CD4-positive, alpha-beta T cell (primary cell): ENCODE measurements at regions of chr11 and their contacts with region 1.

Region 1: DNA sequence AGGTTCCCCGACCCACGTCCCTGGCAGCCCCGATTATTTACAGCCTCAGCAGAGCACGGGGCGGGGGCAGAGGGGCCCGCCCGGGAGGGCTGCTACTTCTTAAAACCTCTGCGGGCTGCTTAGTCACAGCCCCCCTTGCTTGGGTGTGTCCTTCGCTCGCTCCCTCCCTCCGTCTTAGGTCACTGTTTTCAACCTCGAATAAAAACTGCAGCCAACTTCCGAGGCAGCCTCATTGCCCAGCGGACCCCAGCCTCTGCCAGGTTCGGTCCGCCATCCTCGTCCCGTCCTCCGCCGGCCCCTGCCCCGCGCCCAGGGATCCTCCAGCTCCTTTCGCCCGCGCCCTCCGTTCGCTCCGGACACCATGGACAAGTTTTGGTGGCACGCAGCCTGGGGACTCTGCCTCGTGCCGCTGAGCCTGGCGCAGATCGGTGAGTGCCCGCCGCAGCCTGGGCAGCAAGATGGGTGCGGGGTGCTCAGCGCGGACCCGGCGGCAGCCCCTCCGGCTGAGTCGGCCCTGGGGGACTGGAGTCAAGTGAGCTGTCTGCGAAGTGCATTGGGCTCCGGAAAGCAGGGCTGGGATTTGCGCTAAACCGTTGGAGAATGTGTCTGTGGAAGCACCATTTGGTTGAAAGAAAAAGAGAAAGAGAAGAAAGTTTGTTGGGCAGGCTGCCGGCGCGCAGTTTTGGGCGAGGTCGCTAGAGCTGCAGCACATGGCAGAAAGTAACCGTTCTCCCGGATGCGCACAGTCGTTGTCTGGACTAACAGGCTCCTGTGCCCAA is at the start of gene CD44:
- DNase-seq: peak; percentile 70 to 95 (median 80)
- ATAC-seq: peak; percentile 77
- H3K4me3 ChIP-seq: peak within 1 kb of the TSS; percentile 88
- H3K4me3 Mint-ChIP-seq: peak within 1 kb of the TSS; percentile 97
- H3K27ac ChIP-seq: peak within 1 kb of the TSS; percentile 79 to 97
- H3K27ac Mint-ChIP-seq: peak within 1 kb of the TSS; percentile 96
- H3K4me1 ChIP-seq: peaks cover 46% of the 10 kb centered on the region
- H3K4me1 Mint-ChIP-seq: peaks cover 55% of the 10 kb centered on the region
- H3K27me3 ChIP-seq: no peaks in the 10 kb centered on the region
- H3K27me3 Mint-ChIP-seq: no peaks in the 10 kb centered on the region
- CTCF ChIP-seq: no peak
- total RNA-seq, gene CD44: 1,283 to 1,330 TPM

Region 2: DNA sequence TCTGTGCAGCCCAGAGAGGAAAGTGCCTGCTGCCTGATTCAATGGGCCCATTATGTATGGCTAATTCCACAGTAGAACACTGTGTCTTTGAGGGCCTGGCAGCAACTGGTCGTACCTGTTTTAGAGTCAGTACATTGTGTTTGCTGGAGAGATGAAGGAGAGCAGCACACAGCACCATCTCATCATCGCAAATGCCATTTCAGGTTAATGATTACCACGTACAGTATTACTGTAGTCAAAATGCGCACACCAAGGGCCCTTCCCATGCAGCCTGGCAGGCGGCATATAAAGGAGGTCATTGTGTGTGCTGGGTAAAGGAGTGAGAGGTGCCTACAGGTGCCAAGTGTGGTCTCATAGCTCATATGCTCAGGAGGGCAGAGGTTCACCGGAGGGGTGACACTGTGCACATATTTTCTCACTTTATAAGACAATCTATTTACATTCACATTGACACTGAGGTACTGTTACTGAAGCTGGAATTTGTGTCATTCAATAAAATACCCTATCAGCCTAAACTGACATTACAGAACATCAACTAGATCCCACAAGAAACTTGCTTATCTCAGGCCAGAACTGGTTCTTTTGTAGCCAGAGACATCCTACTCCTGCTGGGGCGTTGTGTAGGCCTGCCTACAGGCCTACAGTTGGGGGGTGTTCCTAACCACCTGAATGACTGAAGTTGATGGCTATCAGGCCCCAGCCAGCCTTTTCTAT is 313.3 kb before region 1 on chr11:
- CTCF ChIA-PET with region 1: no interaction called
- POLR2A ChIA-PET with region 1: no interaction called
- intact Hi-C with region 1: no loop called
- DNase-seq: no peak
- ATAC-seq: no peak
- H3K4me3 ChIP-seq: no peak overlapping the region
- H3K4me3 Mint-ChIP-seq: no peak overlapping the region
- H3K27ac ChIP-seq: no peak overlapping the region
- H3K27ac Mint-ChIP-seq: no peak overlapping the region
- H3K4me1 ChIP-seq: no peaks in the 10 kb centered on the region
- H3K4me1 Mint-ChIP-seq: peaks cover 2% of the 10 kb centered on the region
- H3K27me3 ChIP-seq: peaks cover 0 to 10% of the 10 kb centered on the region in 2 experiments
- H3K27me3 Mint-ChIP-seq: peaks cover 4% of the 10 kb centered on the region
- CTCF ChIP-seq: no peak

Region 3: DNA sequence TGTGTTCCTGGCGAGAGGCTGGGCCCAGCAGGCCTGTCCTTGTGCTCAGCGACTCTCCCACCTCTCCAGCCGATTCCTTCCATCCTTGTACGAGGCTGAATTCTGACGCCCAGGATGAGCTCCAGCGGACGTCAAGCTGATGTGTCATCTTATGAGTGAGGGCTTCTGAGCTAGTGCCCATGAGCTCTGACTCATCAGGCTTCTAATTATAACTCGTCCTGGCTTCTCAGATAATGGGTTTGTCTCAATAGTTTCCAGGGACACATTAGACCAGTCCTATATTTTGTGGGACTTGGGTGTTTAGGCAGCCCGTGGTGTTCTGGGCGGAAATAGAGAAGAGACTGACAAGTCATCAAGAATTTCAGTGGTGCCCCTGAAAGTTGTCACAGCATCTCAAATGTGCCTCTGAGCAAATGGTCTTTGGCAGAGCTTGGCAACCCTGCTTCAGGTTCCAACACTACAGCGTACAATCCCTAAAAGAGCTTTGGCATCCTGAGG is 108.4 kb before region 1 on chr11:
- CTCF ChIA-PET with region 1: no interaction called
- POLR2A ChIA-PET with region 1: interaction called, 10 read pairs
- intact Hi-C with region 1: no loop called
- DNase-seq: peak in 7 of 14 experiments; percentile 15 to 77 (median 50)
- ATAC-seq: peak; percentile 62
- H3K4me3 ChIP-seq: no peak overlapping the region
- H3K4me3 Mint-ChIP-seq: peak overlapping the region; percentile 57
- H3K27ac ChIP-seq: no peak overlapping the region
- H3K27ac Mint-ChIP-seq: peak overlapping the region; percentile 77
- H3K4me1 ChIP-seq: peaks cover 26% of the 10 kb centered on the region
- H3K4me1 Mint-ChIP-seq: peaks cover 72% of the 10 kb centered on the region
- H3K27me3 ChIP-seq: no peaks in the 10 kb centered on the region
- H3K27me3 Mint-ChIP-seq: no peaks in the 10 kb centered on the region
- CTCF ChIP-seq: no peak

Region 4: GRCh38 chr11:35047179-35047578 is 92.0 kb before region 1 on chr11:
- CTCF ChIA-PET with region 1: interaction called, 13 read pairs
- POLR2A ChIA-PET with region 1: interaction called, 26 read pairs
- intact Hi-C with region 1: loop called (anchors 1 to 2 kb)
- DNase-seq: peak; percentile 27 to 91 (median 46)
- ATAC-seq: peak; percentile 70
- H3K4me3 ChIP-seq: no peak overlapping the region
- H3K4me3 Mint-ChIP-seq: peak overlapping the region; percentile 83
- H3K27ac ChIP-seq: peak overlapping the region; percentile 93 to 96
- H3K27ac Mint-ChIP-seq: peak overlapping the region; percentile 92
- H3K4me1 ChIP-seq: peaks cover 83% of the 10 kb centered on the region
- H3K4me1 Mint-ChIP-seq: peaks cover 98% of the 10 kb centered on the region
- H3K27me3 ChIP-seq: no peaks in the 10 kb centered on the region
- H3K27me3 Mint-ChIP-seq: no peaks in the 10 kb centered on the region
- CTCF ChIP-seq: no peak

Region 5: GRCh38 chr11:35087648-35088047 is 51.5 kb before region 1 on chr11:
- CTCF ChIA-PET with region 1: no interaction called
- POLR2A ChIA-PET with region 1: interaction called, 30 read pairs
- intact Hi-C with region 1: loop called (anchors 1 to 2 kb)
- DNase-seq: peak in 3 of 14 experiments; percentile 27 to 53 (median 50)
- ATAC-seq: no peak
- H3K4me3 ChIP-seq: no peak overlapping the region
- H3K4me3 Mint-ChIP-seq: no peak overlapping the region
- H3K27ac ChIP-seq: no peak overlapping the region
- H3K27ac Mint-ChIP-seq: peak overlapping the region; percentile 69
- H3K4me1 ChIP-seq: peaks cover 60% of the 10 kb centered on the region
- H3K4me1 Mint-ChIP-seq: peaks cover 91% of the 10 kb centered on the region
- H3K27me3 ChIP-seq: no peaks in the 10 kb centered on the region
- H3K27me3 Mint-ChIP-seq: no peaks in the 10 kb centered on the region
- CTCF ChIP-seq: no peak

Region 6: GRCh38 chr11:35173011-35173511 is 33.9 kb after region 1 on chr11:
- CTCF ChIA-PET with region 1: no interaction called
- POLR2A ChIA-PET with region 1: interaction called, 317 read pairs
- intact Hi-C with region 1: loop called in 1 of 2 experiments (anchors 5 kb)
- DNase-seq: no peak
- ATAC-seq: no peak
- H3K4me3 ChIP-seq: peak overlapping the region; percentile 1
- H3K4me3 Mint-ChIP-seq: peak overlapping the region; percentile 72
- H3K27ac ChIP-seq: peak overlapping the region; percentile 74
- H3K27ac Mint-ChIP-seq: peak overlapping the region; percentile 96
- H3K4me1 ChIP-seq: peaks cover 90% of the 10 kb centered on the region
- H3K4me1 Mint-ChIP-seq: peaks cover 95% of the 10 kb centered on the region
- H3K27me3 ChIP-seq: no peaks in the 10 kb centered on the region
- H3K27me3 Mint-ChIP-seq: no peaks in the 10 kb centered on the region
- CTCF ChIP-seq: no peak